ENCODE measurements at regions of chr21 and their contacts with region 1.

Region 1: GRCh38 chr21:26471099-26471471 is 102.0 kb downstream of the CYYR1 start:
- DNase-seq: no peak
- H3K4me3 Mint-ChIP-seq: no peak overlapping the region
- H3K27ac Mint-ChIP-seq: no peak overlapping the region
- H3K4me1 Mint-ChIP-seq: peaks cover 35% of the 10 kb centered on the region
- H3K27me3 Mint-ChIP-seq: no peaks in the 10 kb centered on the region

Region 2: DNA sequence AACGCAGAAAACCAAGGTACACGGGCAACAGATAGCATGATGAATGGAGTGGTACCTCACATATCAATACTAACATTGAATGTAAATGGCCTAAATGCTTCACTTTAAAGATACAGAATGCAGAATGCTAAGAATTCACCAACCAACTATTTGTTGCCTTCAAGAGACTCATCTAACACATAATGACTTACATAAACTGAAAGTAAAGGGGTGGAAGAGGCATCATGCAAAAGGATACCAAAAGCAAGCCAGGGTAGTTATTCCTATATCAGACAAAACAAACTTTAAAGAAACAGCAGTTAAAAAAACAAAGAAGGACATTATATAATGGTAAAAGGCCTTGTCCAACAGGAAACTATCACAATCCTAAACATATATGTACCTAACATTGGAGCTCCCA is 163.4 kb before region 1 on chr21:
- intact Hi-C with region 1: loop called (anchors 5 kb)
- DNase-seq: no peak
- H3K4me3 Mint-ChIP-seq: no peak overlapping the region
- H3K27ac Mint-ChIP-seq: peak overlapping the region; percentile 4
- H3K4me1 Mint-ChIP-seq: peaks cover 5% of the 10 kb centered on the region
- H3K27me3 Mint-ChIP-seq: no peaks in the 10 kb centered on the region

Region 3: DNA sequence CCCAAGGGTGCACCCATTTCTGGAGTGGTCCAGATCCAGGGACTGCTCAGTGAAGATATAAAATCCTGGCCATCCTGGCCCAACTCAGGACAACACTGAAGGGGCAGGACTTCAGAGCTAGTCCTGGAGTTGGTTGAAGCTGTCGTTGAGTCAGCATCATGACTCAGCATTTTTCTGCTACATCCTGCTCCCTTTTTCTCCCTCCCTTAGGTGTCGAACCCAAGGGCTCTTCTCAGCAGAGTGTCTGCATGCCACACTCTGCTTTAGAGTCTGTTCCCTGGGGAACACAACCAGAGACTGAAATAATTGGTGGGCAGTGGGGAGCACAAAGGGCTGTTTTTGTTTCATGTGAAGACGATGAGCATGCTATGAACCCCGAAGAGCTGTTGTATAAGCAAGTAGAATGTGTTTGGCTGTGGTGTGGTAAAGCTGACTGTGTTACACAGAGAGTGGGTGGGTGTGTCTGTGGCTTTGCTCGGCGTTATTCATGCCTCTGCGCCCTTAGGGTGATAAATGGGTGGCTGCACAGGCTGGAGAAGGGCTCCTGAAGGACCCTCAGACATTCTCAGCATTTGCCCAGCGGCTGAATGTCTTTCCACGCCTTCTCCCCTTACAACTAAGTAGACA is 65.2 kb before region 1 on chr21:
- intact Hi-C with region 1: loop called (anchors 1 kb)
- DNase-seq: peak; percentile 11
- H3K4me3 Mint-ChIP-seq: peak overlapping the region; percentile 42
- H3K27ac Mint-ChIP-seq: peak overlapping the region; percentile 54
- H3K4me1 Mint-ChIP-seq: peaks cover 30% of the 10 kb centered on the region
- H3K27me3 Mint-ChIP-seq: no peaks in the 10 kb centered on the region

Region 4: GRCh38 chr21:26425576-26425975 is 45.5 kb before region 1 on chr21:
- intact Hi-C with region 1: loop called (anchors 2 kb)
- DNase-seq: no peak
- H3K4me3 Mint-ChIP-seq: no peak overlapping the region
- H3K27ac Mint-ChIP-seq: no peak overlapping the region
- H3K4me1 Mint-ChIP-seq: peaks cover 7% of the 10 kb centered on the region
- H3K27me3 Mint-ChIP-seq: no peaks in the 10 kb centered on the region

Region 5: DNA sequence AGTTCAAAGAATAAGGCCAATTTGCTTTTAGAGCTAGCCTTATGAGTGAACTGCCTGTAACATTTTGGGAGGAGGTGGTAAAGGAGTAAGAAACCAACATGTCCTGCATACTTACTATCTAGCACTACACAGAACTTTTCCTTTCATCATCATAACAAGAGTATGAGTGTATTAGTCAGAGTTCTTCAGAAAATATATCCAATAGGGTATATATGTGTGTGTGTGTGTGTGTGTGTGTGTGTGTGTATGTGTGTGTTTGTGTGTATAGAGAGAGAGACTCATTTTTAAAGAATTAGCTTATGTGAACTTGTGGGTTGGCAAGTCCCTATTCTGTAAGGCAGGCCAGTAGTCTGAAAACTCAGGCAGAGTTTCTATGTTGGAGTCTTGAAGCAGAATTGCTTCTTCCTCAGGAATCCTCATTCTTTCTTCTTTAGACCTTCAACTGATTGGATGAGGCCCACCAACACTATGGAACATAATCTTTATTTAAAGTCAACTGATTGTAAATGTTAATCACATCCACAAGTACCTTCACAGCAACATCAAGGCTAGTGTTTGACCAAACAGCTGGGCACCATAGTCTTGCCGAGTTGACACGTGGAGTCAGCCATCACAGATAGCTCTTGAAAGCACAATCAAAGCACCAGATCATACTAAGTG is 19.9 kb before region 1 on chr21:
- intact Hi-C with region 1: loop called (anchors 1 kb)
- DNase-seq: no peak
- H3K4me3 Mint-ChIP-seq: no peak overlapping the region
- H3K27ac Mint-ChIP-seq: peak overlapping the region; percentile 37
- H3K4me1 Mint-ChIP-seq: peaks cover 19% of the 10 kb centered on the region
- H3K27me3 Mint-ChIP-seq: no peaks in the 10 kb centered on the region

Region 6: GRCh38 chr21:26490771-26491170 is 19.7 kb after region 1 on chr21:
- intact Hi-C with region 1: no loop called
- DNase-seq: no peak
- H3K4me3 Mint-ChIP-seq: no peak overlapping the region
- H3K27ac Mint-ChIP-seq: no peak overlapping the region
- H3K4me1 Mint-ChIP-seq: no peaks in the 10 kb centered on the region
- H3K27me3 Mint-ChIP-seq: no peaks in the 10 kb centered on the region